Left ventricle myocardium superior (tissue), 1 donor: ENCODE measurements at regions of chr2 and their contacts with region 1.

Region 1: DNA sequence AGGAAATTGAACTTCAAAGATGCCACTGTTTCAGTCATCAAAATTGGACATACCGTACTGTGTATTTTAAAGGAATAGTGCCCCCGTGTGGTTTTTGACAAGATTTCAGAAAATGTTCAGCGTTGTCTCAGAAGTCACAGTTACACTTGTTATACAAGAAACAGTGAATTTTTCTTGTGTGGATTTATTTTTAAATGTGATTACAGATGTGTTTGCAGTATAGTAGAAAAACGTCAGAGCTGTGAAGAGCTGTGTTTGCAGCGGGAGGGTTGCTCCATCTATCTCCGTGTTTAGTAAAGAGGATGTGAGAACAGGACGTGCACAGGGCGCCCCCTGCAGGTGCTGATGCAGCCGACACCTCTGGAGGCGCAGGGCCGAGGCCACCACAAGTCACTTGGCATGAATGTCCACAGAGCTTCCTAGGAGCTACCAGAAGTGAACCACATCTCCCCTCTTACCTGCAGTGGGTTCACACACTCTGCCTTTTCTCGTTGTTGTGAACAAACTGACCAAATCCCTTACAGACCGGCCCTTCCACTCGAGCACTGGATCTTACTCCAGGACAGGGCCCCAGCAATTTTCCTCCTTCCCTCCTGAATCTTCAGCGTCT is 73.1 kb downstream of the CACNB4 start:
- DNase-seq: peak; percentile 92
- ATAC-seq: peak; percentile 98

Region 2: GRCh38 chr2:151619337-151619989 is 406.3 kb before region 1 on chr2:
- intact Hi-C with region 1: loop called (anchors 10 kb)
- DNase-seq: no peak
- ATAC-seq: no peak

Region 3: GRCh38 chr2:151792589-151792988 is 233.2 kb before region 1 on chr2:
- intact Hi-C with region 1: no loop called
- DNase-seq: no peak
- ATAC-seq: no peak